ENCODE measurements at regions of chrX and their contacts with region 1.

Region 1: DNA sequence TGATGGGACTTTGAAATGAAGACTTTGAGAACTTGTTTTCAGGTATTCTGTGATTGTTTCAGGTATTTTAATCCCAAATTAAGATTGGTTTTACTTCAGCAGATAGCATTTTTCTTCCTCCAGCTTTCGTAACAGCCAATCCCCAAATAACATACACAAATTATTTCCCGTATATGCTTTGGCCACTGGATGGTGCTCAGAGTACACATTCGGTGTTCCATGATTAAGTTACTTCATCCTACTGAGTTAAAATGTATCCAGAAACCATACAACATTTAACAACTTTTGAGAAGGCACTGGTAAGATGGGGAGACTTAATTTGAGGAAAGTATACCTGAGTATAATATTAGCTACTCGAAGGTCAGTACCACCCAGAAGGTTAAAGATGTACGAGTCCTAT is 233.4 kb upstream of the FAM47A start:
- DNase-seq: peak in 1 of 2 experiments; percentile 16
- H3K4me3 ChIP-seq: no peak overlapping the region
- H3K4me3 Mint-ChIP-seq: no peak overlapping the region
- H3K27ac Mint-ChIP-seq: no peak overlapping the region
- H3K4me1 ChIP-seq: no peaks in the 10 kb centered on the region
- H3K4me1 Mint-ChIP-seq: peaks cover 14% of the 10 kb centered on the region
- H3K27me3 ChIP-seq: no peaks in the 10 kb centered on the region
- H3K27me3 Mint-ChIP-seq: no peaks in the 10 kb centered on the region
- CTCF ChIP-seq: peak in 1 of 2 experiments; percentile 40

Region 2: GRCh38 chrX:34325460-34325859 is 40.0 kb before region 1 on chrX:
- CTCF ChIA-PET with region 1: no interaction called
- POLR2A ChIA-PET with region 1: no interaction called
- intact Hi-C with region 1: no loop called
- DNase-seq: no peak
- H3K4me3 ChIP-seq: no peak overlapping the region
- H3K4me3 Mint-ChIP-seq: no peak overlapping the region
- H3K27ac Mint-ChIP-seq: no peak overlapping the region
- H3K4me1 ChIP-seq: no peaks in the 10 kb centered on the region
- H3K4me1 Mint-ChIP-seq: no peaks in the 10 kb centered on the region
- H3K27me3 ChIP-seq: no peaks in the 10 kb centered on the region
- H3K27me3 Mint-ChIP-seq: no peaks in the 10 kb centered on the region
- CTCF ChIP-seq: no peak

Region 3: GRCh38 chrX:34426334-34426733 is 60.9 kb after region 1 on chrX:
- CTCF ChIA-PET with region 1: no interaction called
- POLR2A ChIA-PET with region 1: no interaction called
- intact Hi-C with region 1: loop called (anchors 5 kb)
- DNase-seq: peak in 1 of 2 experiments; percentile 19
- H3K4me3 ChIP-seq: no peak overlapping the region
- H3K4me3 Mint-ChIP-seq: no peak overlapping the region
- H3K27ac Mint-ChIP-seq: no peak overlapping the region
- H3K4me1 ChIP-seq: no peaks in the 10 kb centered on the region
- H3K4me1 Mint-ChIP-seq: no peaks in the 10 kb centered on the region
- H3K27me3 ChIP-seq: no peaks in the 10 kb centered on the region
- H3K27me3 Mint-ChIP-seq: peaks cover 7% of the 10 kb centered on the region
- CTCF ChIP-seq: peak in 1 of 2 experiments; percentile 48

Region 4: GRCh38 chrX:34521563-34521962 is 156.1 kb after region 1 on chrX:
- CTCF ChIA-PET with region 1: no interaction called
- POLR2A ChIA-PET with region 1: no interaction called
- intact Hi-C with region 1: loop called (anchors 5 kb)
- DNase-seq: peak in 1 of 2 experiments; percentile 0
- H3K4me3 ChIP-seq: no peak overlapping the region
- H3K4me3 Mint-ChIP-seq: no peak overlapping the region
- H3K27ac Mint-ChIP-seq: no peak overlapping the region
- H3K4me1 ChIP-seq: no peaks in the 10 kb centered on the region
- H3K4me1 Mint-ChIP-seq: no peaks in the 10 kb centered on the region
- H3K27me3 ChIP-seq: no peaks in the 10 kb centered on the region
- H3K27me3 Mint-ChIP-seq: no peaks in the 10 kb centered on the region
- CTCF ChIP-seq: peak in 1 of 2 experiments; percentile 28

Region 5: GRCh38 chrX:34638116-34638515 is 272.6 kb after region 1 on chrX:
- CTCF ChIA-PET with region 1: no interaction called
- POLR2A ChIA-PET with region 1: no interaction called
- intact Hi-C with region 1: loop called (anchors 2 kb)
- DNase-seq: peak in 1 of 2 experiments; percentile 34
- H3K4me3 ChIP-seq: no peak overlapping the region
- H3K4me3 Mint-ChIP-seq: no peak overlapping the region
- H3K27ac Mint-ChIP-seq: no peak overlapping the region
- H3K4me1 ChIP-seq: no peaks in the 10 kb centered on the region
- H3K4me1 Mint-ChIP-seq: no peaks in the 10 kb centered on the region
- H3K27me3 ChIP-seq: no peaks in the 10 kb centered on the region
- H3K27me3 Mint-ChIP-seq: no peaks in the 10 kb centered on the region
- CTCF ChIP-seq: peak; percentile 34 to 35

Region 6: GRCh38 chrX:34859191-34859590 is 493.7 kb after region 1 on chrX:
- CTCF ChIA-PET with region 1: no interaction called
- POLR2A ChIA-PET with region 1: no interaction called
- intact Hi-C with region 1: no loop called
- DNase-seq: no peak
- H3K4me3 ChIP-seq: no peak overlapping the region
- H3K4me3 Mint-ChIP-seq: no peak overlapping the region
- H3K27ac Mint-ChIP-seq: no peak overlapping the region
- H3K4me1 ChIP-seq: no peaks in the 10 kb centered on the region
- H3K4me1 Mint-ChIP-seq: no peaks in the 10 kb centered on the region
- H3K27me3 ChIP-seq: no peaks in the 10 kb centered on the region
- H3K27me3 Mint-ChIP-seq: peaks cover 2% of the 10 kb centered on the region
- CTCF ChIP-seq: no peak

Measured in Caco-2 (cell line).